ENCODE measurements at regions of chr1 and their contacts with region 1.

Region 1: GRCh38 chr1:200488375-200489165 is 78.7 kb upstream of the ZNF281 start:
- DNase-seq: peak; percentile 82
- H3K4me3 ChIP-seq: no peak overlapping the region
- H3K27ac ChIP-seq: no peak overlapping the region
- H3K4me1 ChIP-seq: no peaks in the 10 kb centered on the region
- H3K27me3 ChIP-seq: no peaks in the 10 kb centered on the region
- CTCF ChIP-seq: peak; percentile 87

Region 2: DNA sequence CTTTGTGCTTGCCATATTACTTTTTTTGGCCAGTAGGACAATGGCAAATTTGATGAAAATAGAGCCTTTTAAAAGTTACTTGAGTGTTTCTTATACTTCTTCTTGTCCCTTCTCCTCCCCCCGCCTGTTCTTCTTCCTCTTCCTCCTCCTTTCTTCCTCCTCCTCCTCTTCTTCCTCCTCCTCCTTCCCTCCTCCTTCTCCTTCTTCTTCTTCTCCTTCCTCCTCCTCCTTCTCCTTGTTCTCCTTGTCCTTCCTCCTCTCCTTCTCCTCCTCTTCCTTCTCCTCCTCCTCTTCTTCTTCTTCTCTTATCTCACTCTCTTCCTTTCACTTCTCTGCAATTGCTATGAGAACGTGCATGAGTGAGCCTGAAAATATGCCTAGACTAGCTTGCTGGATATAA is 927.2 kb before region 1 on chr1:
- CTCF ChIA-PET with region 1: no interaction called
- POLR2A ChIA-PET with region 1: no interaction called
- intact Hi-C with region 1: loop called (anchors 10 kb)
- DNase-seq: no peak
- H3K4me3 ChIP-seq: no peak overlapping the region
- H3K27ac ChIP-seq: no peak overlapping the region
- H3K4me1 ChIP-seq: no peaks in the 10 kb centered on the region
- H3K27me3 ChIP-seq: no peaks in the 10 kb centered on the region
- CTCF ChIP-seq: no peak

Region 3: DNA sequence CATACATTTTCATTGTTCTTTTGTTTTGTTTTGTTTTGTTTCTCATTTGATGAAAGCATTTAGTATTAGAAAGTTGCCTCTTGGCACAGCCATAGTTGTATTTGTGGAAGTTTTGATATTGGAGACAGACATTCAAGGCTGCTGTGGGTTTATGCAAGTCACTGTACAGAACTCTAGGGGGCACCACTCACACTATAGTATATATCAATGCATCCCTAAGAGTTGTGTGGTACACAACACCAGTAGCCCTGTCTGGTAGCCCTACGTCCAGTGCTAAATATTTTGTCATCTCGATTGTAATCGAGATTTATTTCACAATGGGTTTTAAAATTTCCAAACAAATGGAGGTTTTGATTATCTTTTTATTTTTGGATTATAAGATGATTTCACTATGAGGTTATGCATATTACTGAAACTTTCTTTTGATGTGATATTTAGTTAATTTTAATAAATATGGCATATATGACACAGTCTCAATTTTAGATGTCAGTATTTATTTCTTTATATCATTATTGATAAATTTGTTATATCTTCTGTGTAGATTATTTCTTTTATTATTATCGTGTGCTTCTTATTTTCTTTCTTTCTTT is 348.8 kb before region 1 on chr1:
- CTCF ChIA-PET with region 1: no interaction called
- POLR2A ChIA-PET with region 1: no interaction called
- intact Hi-C with region 1: loop called (anchors 5 kb)
- DNase-seq: peak; percentile 79
- H3K4me3 ChIP-seq: no peak overlapping the region
- H3K27ac ChIP-seq: no peak overlapping the region
- H3K4me1 ChIP-seq: no peaks in the 10 kb centered on the region
- H3K27me3 ChIP-seq: no peaks in the 10 kb centered on the region
- CTCF ChIP-seq: peak; percentile 88

Region 4: DNA sequence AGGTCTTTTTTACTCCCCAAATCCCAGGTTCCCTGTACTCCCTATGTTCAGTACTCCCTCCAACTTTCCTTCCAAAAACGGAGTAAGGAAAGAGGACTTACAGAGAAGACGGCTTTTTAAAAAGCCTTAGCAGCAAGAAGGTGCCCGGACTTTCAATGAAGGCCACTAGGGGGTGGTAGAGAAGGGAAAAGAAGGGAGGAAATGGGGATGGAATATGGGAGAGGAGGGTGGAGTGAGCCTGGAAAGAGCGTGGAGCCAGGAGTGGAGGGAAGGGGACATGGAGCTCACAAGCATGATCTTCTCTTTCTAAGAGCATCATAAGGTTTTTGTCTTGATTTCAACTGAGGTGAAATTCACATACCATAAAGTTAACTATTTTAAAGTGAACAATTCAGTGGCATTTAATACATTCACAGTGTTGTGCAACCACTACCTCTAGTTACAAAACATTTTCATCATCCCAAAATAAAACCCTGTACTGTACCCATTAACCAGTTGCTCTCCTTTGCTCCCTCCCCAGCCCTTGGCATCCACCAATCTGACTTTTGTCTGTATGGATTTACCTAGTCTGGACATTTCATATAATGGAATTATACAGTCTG is 208.7 kb before region 1 on chr1:
- CTCF ChIA-PET with region 1: interaction called, 3 read pairs
- POLR2A ChIA-PET with region 1: no interaction called
- intact Hi-C with region 1: loop called (anchors 2 kb)
- DNase-seq: peak; percentile 77
- H3K4me3 ChIP-seq: no peak overlapping the region
- H3K27ac ChIP-seq: no peak overlapping the region
- H3K4me1 ChIP-seq: no peaks in the 10 kb centered on the region
- H3K27me3 ChIP-seq: no peaks in the 10 kb centered on the region
- CTCF ChIP-seq: peak; percentile 80

Region 5: DNA sequence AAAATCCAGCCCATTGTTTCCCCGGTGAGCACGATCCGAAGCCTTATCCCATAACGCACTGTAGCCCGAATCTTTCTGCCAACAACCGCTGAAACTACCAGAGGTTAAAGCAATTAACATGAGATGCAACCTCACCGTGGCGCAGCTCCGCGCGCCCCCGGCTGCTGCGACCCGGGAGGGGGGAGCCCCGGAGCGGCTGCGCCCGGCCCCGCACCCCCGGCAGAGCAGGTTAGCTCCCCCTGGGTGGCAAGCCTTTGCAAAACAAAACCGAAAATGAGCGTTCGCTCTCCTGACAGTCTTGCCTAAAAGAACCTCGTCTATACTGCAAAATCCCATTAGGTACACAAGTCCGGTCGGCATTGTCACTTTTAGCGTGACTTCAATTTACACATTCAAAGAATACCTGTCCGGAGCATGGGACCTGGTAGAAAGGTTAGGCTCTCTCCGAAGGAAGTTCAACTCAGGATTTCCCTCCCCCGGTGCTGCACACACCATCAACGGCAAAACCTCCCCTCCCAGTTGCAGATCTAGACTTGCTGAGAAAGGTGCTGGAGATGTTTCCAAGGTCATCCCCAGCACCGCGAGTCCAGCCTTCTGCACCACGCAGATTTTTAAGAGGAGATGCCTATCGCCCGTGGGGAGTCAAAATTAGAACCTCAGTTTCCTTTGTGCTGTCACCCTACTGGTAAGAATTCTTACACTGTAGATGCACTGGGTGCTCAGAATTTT is 186.2 kb before region 1 on chr1:
- CTCF ChIA-PET with region 1: no interaction called
- POLR2A ChIA-PET with region 1: no interaction called
- intact Hi-C with region 1: loop called (anchors 10 kb)
- DNase-seq: peak; percentile 33
- H3K4me3 ChIP-seq: peak overlapping the region; percentile 69
- H3K27ac ChIP-seq: no peak overlapping the region
- H3K4me1 ChIP-seq: peaks cover 6% of the 10 kb centered on the region
- H3K27me3 ChIP-seq: no peaks in the 10 kb centered on the region
- CTCF ChIP-seq: no peak; the same call in 1 of the 2 replicates

Region 6: DNA sequence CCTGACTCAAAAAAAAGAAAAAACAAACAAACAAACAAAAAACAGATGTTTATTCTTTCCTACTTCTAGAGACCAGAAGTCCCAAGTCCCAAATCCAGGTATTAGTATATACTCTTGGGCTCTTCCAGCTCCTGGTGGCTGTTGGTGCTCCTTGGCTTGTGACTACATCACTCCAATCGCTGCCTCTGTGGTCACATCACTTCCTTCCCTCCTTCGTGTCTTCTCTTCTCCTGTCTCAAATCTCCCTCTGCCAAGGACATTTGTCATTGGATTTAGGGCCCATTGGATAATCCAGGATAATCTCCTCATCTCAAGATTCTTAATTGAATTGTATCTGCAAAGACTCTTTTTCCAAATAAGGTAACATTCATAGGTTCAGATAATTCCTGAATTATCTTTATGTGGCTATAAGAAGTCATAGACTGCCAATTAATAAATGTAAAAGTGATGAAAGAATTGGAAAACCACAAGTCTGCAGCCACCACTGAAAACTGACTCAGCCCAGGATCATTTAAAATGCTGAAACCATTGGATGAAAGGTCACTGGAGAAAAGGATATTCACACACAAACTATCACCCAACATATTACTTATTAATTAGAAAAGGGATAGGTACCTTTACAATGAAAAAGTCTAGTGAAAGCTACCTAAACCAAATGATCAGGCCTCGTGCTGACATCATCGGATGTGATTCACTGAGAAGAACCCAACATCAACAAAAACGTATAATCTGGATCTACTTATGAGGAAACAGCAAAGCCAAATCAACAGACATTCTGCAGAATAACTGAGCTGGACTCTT is 145.9 kb before region 1 on chr1:
- CTCF ChIA-PET with region 1: no interaction called
- POLR2A ChIA-PET with region 1: no interaction called
- intact Hi-C with region 1: loop called (anchors 10 kb)
- DNase-seq: no peak
- H3K4me3 ChIP-seq: no peak overlapping the region
- H3K27ac ChIP-seq: no peak overlapping the region
- H3K4me1 ChIP-seq: no peaks in the 10 kb centered on the region
- H3K27me3 ChIP-seq: no peaks in the 10 kb centered on the region
- CTCF ChIP-seq: no peak

Measured in A673 (cell line).